Posterior cingulate gyrus (tissue), 11 donors: ENCODE measurements at regions of chr1 and their contacts with region 1.

Region 1: GRCh38 chr1:229258031-229258756 is 12.7 kb upstream of the RAB4A start:
- DNase-seq: peak in 8 of 10 donors; percentile 30 to 93 (median 76)

Region 2: GRCh38 chr1:229342656-229343569 is 84.7 kb after region 1 on chr1 and contains the start of gene CCSAP:
- intact Hi-C with region 1: no loop called
- DNase-seq: peak; percentile 47 to 95 (median 62)

Region 3: GRCh38 chr1:229461032-229461668 is 203.0 kb after region 1 on chr1:
- intact Hi-C with region 1: no loop called
- DNase-seq: peak in 6 of 10 donors; percentile 20 to 89 (median 48)

Region 4: DNA sequence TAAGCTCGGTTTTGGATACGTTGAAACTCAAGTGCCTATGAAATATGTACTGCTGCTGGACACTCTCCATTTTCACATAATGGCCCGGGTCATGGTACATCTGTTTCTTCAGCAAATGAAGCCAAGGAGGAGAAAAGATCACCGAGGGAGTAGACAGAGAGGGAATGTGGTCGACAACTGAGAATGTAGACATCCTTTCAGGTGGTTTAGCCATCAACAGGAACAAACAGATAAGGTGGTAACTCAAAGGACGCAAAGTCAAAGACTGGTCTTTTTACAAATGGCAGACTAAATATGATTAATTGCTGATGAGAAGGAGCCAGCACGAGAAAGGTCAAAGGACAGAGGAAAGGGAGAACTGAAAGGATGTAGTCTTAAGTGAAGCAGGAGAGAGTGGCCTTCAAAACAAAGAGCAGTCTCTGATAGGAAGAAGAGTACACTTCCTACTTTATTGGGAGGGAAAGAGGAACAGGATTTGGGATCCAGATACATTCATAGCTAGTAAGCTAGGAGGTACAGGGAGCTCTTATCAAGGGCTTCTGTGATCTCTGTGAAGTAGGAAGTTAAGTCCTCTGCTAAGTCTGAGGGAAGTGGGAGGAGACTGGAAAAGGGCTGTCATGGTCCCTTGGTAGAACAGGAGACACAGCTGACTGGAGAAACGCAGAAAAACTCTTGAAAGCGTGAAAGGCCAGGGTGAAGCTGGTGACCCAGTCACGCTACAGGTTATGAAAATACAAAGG is 221.6 kb after region 1 on chr1:
- intact Hi-C with region 1: loop called (anchors 1 kb)
- DNase-seq: no peak

Region 5: GRCh38 chr1:229514578-229515275 is 256.5 kb after region 1 on chr1:
- intact Hi-C with region 1: loop called (anchors 10 kb)
- DNase-seq: peak; percentile 45 to 96 (median 70)